Activated T-helper 1 cell treated with anti-CD3 and anti-CD28 coated beads, Interleukin-12 subunit alpha, Interleukin-12 subunit beta, Interleukin-2, Interleukin-4 antibody, amounts not matched to agents 30 ng/mL and 10 ng/mL and 1 ng/mL, durations not matched to agents 14 hours and 24 hours and 36 hours (primary cell): ENCODE measurements at regions of chr16 and their contacts with region 1.

Region 1: GRCh38 chr16:74309789-74310781 is 13.5 kb downstream of the PSMD7 start:
- DNase-seq: no peak
- H3K4me3 Mint-ChIP-seq: no peak overlapping the region
- H3K27ac Mint-ChIP-seq: no peak overlapping the region
- H3K4me1 Mint-ChIP-seq: no peaks in the 10 kb centered on the region
- H3K27me3 Mint-ChIP-seq: no peaks in the 10 kb centered on the region

Region 2: DNA sequence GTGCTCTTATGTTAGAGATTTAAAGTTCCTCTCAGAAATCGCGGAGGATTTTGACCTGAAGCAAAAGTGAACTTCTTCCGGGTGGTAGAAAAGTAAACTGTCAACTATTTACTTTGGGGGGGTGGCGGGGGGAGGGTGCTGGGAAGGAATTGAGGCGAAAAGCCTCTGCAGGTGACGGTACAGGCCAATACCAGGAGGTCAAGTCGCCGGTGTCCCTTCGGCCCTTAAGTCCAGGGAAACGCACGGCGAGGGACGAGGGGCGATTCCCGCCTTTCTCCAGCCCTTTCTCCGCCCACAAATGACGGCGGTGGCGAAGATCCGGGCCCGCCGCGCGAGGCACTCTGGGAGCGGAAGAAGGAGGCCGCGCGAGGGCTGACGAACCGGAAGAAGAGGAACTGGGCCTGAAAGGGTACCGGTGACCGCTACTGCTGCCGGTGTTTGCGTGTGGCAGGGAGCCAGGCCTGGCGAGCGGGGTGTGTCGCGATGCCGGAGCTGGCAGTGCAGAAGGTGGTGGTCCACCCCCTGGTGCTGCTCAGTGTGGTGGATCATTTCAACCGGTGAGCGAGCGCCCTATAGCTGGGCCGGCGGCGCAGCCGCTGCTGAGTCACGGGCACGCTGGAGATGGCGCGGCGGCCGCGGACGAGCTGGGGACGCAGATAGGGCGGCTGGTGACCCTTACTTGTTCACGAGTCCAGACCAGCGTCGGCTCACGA is 13.5 kb before region 1 on chr16 and contains the start of gene PSMD7:
- intact Hi-C with region 1: loop called (anchors 1 kb)
- DNase-seq: peak; percentile 88
- H3K4me3 Mint-ChIP-seq: peak within 1 kb of the TSS; percentile 90
- H3K27ac Mint-ChIP-seq: peak within 1 kb of the TSS; percentile 93
- H3K4me1 Mint-ChIP-seq: peaks cover 27% of the 10 kb centered on the region
- H3K27me3 Mint-ChIP-seq: no peaks in the 10 kb centered on the region
- total RNA-seq, gene PSMD7: 168 and 175 TPM in 2 replicates

Region 3: DNA sequence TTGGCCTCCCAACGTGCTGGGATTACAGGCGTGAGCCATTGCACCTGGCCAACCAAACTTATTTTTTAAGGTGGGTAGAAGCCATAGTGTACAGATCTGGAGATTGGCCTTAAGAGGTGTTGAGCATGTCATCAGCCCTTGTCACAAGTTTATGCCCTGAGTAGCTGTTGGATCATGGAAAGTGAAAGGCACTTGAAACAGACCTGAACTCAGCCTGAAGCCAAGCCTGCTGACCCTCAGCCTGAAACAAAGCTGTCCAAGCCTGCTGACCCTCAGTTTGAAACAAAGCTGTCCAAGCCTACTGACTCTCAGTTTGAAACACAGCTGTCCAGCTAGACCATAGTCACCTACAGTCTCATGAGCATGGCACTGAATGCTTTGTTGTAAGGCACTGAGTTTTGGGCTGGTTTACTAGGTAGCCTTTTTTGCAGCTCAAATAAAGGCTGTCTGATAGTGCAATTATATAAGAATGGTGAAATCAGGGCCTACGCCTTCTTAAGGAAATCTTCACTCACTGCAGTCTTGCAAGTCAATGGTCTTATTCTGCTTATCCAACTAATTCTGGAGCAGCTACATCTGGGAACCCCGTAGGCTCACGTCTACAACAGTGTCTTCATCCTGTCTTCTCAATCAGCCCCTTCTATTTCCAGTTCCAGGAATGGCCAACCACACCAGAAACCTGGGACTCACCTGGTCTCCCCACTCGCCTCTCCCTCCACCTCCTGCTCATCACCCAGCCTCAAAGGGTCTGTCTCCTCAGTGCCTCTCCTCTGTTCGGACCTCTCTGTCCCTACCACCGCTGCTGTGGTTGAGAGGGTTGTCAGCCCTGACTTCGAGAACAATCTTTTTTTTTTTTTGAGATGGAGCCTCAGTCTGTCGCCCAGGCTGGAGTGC is 63.1 kb after region 1 on chr16:
- intact Hi-C with region 1: no loop called
- DNase-seq: no peak
- H3K4me3 Mint-ChIP-seq: no peak overlapping the region
- H3K27ac Mint-ChIP-seq: no peak overlapping the region
- H3K4me1 Mint-ChIP-seq: peaks cover 6% of the 10 kb centered on the region
- H3K27me3 Mint-ChIP-seq: no peaks in the 10 kb centered on the region

Region 4: GRCh38 chr16:74431516-74431915 is 121.4 kb after region 1 on chr16:
- intact Hi-C with region 1: loop called (anchors 5 kb)
- DNase-seq: no peak
- H3K4me3 Mint-ChIP-seq: no peak overlapping the region
- H3K27ac Mint-ChIP-seq: no peak overlapping the region
- H3K4me1 Mint-ChIP-seq: no peaks in the 10 kb centered on the region
- H3K27me3 Mint-ChIP-seq: no peaks in the 10 kb centered on the region